CD4-positive, alpha-beta memory T cell (primary cell): ENCODE measurements at regions of chr11 and their contacts with region 1.

Region 1: DNA sequence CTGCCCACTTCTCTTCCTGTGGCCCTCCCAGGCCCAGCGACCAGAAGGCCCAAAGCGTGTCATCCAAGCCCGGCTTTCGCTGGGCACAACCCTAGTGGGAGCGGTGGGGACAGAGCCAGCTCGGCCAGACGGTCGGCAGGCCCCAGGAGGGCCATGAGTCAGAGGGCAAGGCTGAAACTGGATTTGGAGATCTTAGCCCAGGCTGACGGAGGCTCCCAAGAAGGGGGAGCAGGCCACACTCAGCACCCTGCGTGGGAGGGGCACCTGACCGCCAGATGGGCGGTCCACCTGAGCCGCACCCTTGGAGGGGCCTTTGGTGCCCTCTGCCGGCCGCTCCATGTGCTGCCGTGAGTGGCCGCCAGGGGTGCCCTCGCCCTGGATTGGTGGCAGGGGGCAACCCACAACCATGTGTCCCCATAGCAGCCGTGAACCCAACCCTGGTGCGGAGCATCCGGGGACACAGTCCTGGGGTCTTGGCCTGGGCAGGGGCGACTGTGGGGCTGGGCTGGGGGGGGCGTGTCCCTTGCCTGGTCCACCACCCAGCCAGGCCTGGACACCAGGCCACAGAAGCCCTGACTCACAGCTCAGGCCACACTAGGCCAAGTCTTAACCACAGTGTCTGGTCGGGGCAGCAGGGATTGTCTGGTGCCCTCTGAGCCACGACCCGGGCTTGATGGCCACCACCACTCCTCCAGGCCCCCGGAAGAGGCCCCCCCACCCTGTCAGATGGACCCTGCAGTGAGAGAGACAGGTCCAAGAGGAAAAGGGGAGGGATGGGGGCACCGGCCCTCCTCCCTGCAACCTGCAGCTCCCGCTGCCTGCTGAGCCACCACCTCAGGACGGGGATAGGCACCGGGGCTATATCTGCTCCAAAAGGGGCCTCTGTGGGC is 19.2 kb upstream of the TALDO1 start:
- DNase-seq: peak; percentile 71 to 78 (median 75)
- H3K4me3 ChIP-seq: no peak overlapping the region
- H3K4me3 Mint-ChIP-seq: no peak overlapping the region
- H3K27ac ChIP-seq: no peak overlapping the region
- H3K27ac Mint-ChIP-seq: no peak overlapping the region
- H3K4me1 ChIP-seq: peaks cover 26% of the 10 kb centered on the region
- H3K4me1 Mint-ChIP-seq: peaks cover 4 to 13% (median 9%) of the 10 kb centered on the region in 4 donors
- H3K27me3 ChIP-seq: no peaks in the 10 kb centered on the region
- H3K27me3 Mint-ChIP-seq: peaks cover 1 to 2% of the 10 kb centered on the region in 2 donors

Region 2: GRCh38 chr11:528815-529599 is 199.1 kb before region 1 on chr11:
- CTCF ChIA-PET with region 1: no interaction called
- POLR2A ChIA-PET with region 1: no interaction called
- intact Hi-C with region 1: no loop called
- DNase-seq: peak in 1 of 5 donors; percentile 32
- H3K4me3 ChIP-seq: no peak overlapping the region
- H3K4me3 Mint-ChIP-seq: no peak overlapping the region
- H3K27ac ChIP-seq: no peak overlapping the region
- H3K27ac Mint-ChIP-seq: no peak overlapping the region
- H3K4me1 ChIP-seq: peaks cover 4% of the 10 kb centered on the region
- H3K4me1 Mint-ChIP-seq: peaks cover 0 to 4% (median 0%) of the 10 kb centered on the region in 4 donors
- H3K27me3 ChIP-seq: no peaks in the 10 kb centered on the region
- H3K27me3 Mint-ChIP-seq: no peaks in the 10 kb centered on the region

Region 3: DNA sequence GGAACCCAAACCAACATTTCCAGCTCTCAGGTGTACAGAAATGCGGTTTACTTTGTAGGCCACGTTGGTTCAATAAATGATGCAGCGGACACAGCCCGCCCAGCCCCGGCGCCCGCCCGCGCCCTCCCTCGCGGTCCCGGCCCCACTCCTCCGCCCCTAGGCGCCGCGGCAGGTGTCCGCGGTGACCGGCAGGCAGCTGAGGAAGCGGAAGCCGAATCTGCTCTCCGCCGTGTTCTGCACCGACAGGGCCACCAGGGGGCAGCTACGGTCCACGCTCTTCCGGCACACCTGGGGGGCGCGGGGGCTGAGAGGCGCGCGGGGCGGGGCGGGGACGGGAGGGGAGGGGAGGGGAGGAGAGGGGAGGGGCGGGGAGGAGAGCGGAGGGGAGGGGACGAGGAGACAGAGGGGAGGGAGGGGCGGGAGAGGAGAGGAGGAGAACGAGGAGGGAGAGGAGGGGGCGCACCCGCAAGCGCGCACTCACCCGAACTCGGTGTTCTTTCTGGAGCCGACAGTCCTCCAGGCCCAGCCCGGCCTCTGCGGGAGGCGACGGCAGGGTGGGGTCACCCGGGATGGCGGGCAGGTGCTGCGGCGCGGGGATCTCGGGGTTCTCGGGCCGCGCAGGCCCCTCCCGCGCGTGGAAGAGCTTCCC is 173.2 kb before region 1 on chr11:
- CTCF ChIA-PET with region 1: interaction called, 41 read pairs
- POLR2A ChIA-PET with region 1: interaction called, 40 read pairs
- intact Hi-C with region 1: loop called (anchors 1 kb)
- DNase-seq: peak; percentile 72 to 77 (median 74)
- H3K4me3 ChIP-seq: peak overlapping the region in 1 of 2 donors; percentile 43
- H3K4me3 Mint-ChIP-seq: peak overlapping the region in 6 of 8 donors; percentile 13 to 68 (median 58)
- H3K27ac ChIP-seq: peak overlapping the region; percentile 21
- H3K27ac Mint-ChIP-seq: peak overlapping the region in 1 of 7 donors; percentile 46
- H3K4me1 ChIP-seq: peaks cover 16% of the 10 kb centered on the region
- H3K4me1 Mint-ChIP-seq: peaks cover 3 to 12% (median 4%) of the 10 kb centered on the region in 4 donors
- H3K27me3 ChIP-seq: no peaks in the 10 kb centered on the region
- H3K27me3 Mint-ChIP-seq: no peaks in the 10 kb centered on the region

Region 4: DNA sequence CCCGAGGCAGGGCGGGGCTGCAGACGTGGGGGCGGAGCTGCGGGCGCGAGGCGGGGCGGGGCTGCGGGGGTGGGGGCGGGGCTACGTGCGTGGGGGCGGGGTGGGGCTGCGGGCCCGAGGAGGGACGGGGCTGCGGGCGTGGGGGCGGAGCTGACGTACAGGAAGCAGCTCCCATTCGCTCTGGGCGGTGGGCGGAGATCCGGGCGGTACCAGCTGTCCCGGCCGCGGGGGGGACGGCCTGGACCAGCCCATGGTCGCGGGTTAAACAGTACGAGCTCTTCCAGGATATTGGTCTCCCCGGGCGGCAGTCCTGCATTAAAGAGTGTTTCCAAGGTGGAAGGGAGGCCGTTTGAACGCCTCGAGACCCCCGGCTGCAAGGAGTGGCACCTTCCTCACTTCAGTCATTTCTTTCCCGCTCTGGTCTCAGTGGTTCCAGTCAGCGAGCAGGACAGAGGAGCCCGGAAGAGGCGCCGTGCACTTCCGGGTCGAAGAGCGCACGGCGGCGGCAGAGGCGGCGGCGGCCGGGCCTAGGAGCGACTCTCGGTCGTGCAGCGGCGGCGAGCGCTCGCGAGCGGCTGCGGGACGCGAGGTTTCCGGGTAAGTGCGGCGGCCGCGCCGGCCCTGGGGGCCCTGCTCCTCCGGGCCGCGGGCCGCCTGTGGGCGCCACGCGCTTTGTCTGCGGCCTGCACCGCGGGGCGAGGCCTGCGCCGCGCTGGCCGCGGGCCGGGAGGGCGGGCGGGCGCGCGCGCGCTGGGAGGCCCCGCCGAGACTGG is 151.9 kb before region 1 on chr11 and contains the start of gene PHRF1:
- CTCF ChIA-PET with region 1: interaction called, 9 read pairs
- POLR2A ChIA-PET with region 1: interaction called, 23 read pairs
- intact Hi-C with region 1: loop called (anchors 1 kb)
- DNase-seq: peak; percentile 95 to 98 (median 97)
- H3K4me3 ChIP-seq: peak within 1 kb of the TSS; percentile 85 to 93
- H3K4me3 Mint-ChIP-seq: peak within 1 kb of the TSS; percentile 94 to 98 (median 98)
- H3K27ac ChIP-seq: peak within 1 kb of the TSS; percentile 77
- H3K27ac Mint-ChIP-seq: peak within 1 kb of the TSS; percentile 93 to 99 (median 99)
- H3K4me1 ChIP-seq: peaks cover 58% of the 10 kb centered on the region
- H3K4me1 Mint-ChIP-seq: peaks cover 31 to 56% (median 45%) of the 10 kb centered on the region in 4 donors
- H3K27me3 ChIP-seq: no peaks in the 10 kb centered on the region
- H3K27me3 Mint-ChIP-seq: peaks cover 0 to 11% of the 10 kb centered on the region in 2 donors
- total RNA-seq, gene PHRF1: 49.2 to 54.5 TPM

Region 5: GRCh38 chr11:662689-663274 is 65.3 kb before region 1 on chr11:
- CTCF ChIA-PET with region 1: interaction called, 28 read pairs
- POLR2A ChIA-PET with region 1: no interaction called
- intact Hi-C with region 1: loop called (anchors 1 kb)
- DNase-seq: peak in 2 of 5 donors; percentile 18 to 35
- H3K4me3 ChIP-seq: no peak overlapping the region
- H3K4me3 Mint-ChIP-seq: no peak overlapping the region
- H3K27ac ChIP-seq: no peak overlapping the region
- H3K27ac Mint-ChIP-seq: peak overlapping the region in 3 of 7 donors; percentile 36 to 77 (median 57)
- H3K4me1 ChIP-seq: no peaks in the 10 kb centered on the region
- H3K4me1 Mint-ChIP-seq: peaks cover 0 to 3% (median under 1%) of the 10 kb centered on the region in 4 donors
- H3K27me3 ChIP-seq: no peaks in the 10 kb centered on the region
- H3K27me3 Mint-ChIP-seq: no peaks in the 10 kb centered on the region

Region 6: GRCh38 chr11:765025-765801 is 37.1 kb after region 1 on chr11:
- CTCF ChIA-PET with region 1: interaction called, 11 read pairs
- POLR2A ChIA-PET with region 1: no interaction called
- intact Hi-C with region 1: loop called (anchors 1 kb)
- DNase-seq: peak; percentile 61 to 67 (median 63)
- H3K4me3 ChIP-seq: no peak overlapping the region
- H3K4me3 Mint-ChIP-seq: no peak overlapping the region
- H3K27ac ChIP-seq: no peak overlapping the region
- H3K27ac Mint-ChIP-seq: peak overlapping the region in 5 of 7 donors; percentile 55 to 81 (median 75)
- H3K4me1 ChIP-seq: no peaks in the 10 kb centered on the region
- H3K4me1 Mint-ChIP-seq: no peaks in the 10 kb centered on the region
- H3K27me3 ChIP-seq: no peaks in the 10 kb centered on the region
- H3K27me3 Mint-ChIP-seq: no peaks in the 10 kb centered on the region